ENCODE measurements at regions of chr13 and their contacts with region 1.

Region 1: DNA sequence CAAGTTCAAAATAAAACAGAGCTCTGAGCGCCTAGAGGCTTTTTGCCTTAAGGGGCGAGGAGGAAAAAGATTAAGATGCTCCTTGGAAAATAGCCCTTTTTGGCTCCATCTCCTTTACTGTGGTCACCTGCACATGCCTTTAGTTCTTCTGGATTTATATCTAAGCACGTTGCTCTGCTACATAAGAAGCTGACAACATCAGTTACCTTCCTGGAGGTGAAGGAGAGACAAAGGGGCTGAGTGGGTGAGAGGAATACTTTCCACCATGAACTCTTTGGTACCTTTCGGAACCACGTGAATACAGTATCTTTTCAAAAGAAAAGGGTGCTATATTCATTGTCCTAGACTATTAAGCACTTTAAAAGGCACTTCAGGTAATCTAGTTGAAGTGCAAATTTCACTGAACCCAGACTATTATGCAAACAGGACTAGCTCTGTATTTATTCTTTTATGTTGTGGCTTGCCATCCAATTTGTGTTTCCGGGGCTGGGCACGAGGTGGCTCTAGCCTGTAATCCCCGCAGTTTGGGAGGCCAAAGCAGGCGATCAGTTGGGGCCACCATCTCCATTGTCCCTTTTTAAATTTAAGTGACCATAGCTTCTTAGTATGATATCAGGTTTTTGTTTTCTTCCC is 201.5 kb downstream of the TM9SF2 start:
- DNase-seq: no peak
- H3K4me3 ChIP-seq: no peak overlapping the region
- H3K27ac ChIP-seq: peak overlapping the region; percentile 31; the same call in 1 of the 2 replicates
- H3K4me1 ChIP-seq: peaks cover 6 to 37% (median 14%) of the 10 kb centered on the region in 4 experiments
- H3K27me3 ChIP-seq: no peaks in the 10 kb centered on the region
- CTCF ChIP-seq: peak; percentile 25 to 42 (median 26); a peak in 3 of 4 replicates
- EP300 ChIP-seq: no peak
- POLR2A ChIP-seq: no peak
- RAD21 ChIP-seq: peak; percentile 52; a peak in 3 of 4 replicates

Region 2: DNA sequence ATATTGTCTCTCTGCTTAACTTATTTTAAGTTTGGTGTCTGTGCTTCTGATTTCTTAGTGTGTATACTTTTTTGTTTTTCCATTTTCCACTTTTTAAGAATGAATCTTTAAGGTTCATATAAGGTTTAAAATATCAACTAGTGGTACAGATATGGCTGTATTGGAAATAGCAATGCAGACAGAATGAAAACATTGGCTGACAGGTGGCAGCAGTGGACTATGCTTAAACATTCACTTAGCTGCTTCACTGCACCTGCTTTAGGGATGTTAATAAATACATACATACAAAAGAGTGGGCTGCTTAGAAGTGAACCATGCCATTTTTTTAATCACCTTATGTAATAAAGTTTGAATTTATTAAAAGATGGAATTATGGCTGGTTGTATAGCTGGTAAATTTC is 174.3 kb before region 1 on chr13:
- CTCF ChIA-PET with region 1: no interaction called
- POLR2A ChIA-PET with region 1: no interaction called
- DNase-seq: no peak
- H3K4me3 ChIP-seq: no peak overlapping the region
- H3K27ac ChIP-seq: no peak overlapping the region
- H3K4me1 ChIP-seq: peaks cover 0 to 2% (median 0%) of the 10 kb centered on the region in 4 experiments; a peak in 1 of 7 replicates
- H3K27me3 ChIP-seq: no peaks in the 10 kb centered on the region
- CTCF ChIP-seq: no peak
- EP300 ChIP-seq: no peak
- POLR2A ChIP-seq: no peak
- RAD21 ChIP-seq: peak; percentile 28 to 33

Region 3: GRCh38 chr13:99717959-99718674 is 15.3 kb after region 1 on chr13:
- CTCF ChIA-PET with region 1: interaction called, 7 read pairs
- POLR2A ChIA-PET with region 1: interaction called, 14 read pairs
- DNase-seq: no peak
- H3K4me3 ChIP-seq: peak overlapping the region in 1 of 4 experiments; percentile 25; a peak in 1 of 8 replicates
- H3K27ac ChIP-seq: peak overlapping the region; percentile 59; the same call in 1 of the 2 replicates
- H3K4me1 ChIP-seq: peaks cover 3 to 13% (median 11%) of the 10 kb centered on the region in 4 experiments; a peak in 6 of 7 replicates
- H3K27me3 ChIP-seq: no peaks in the 10 kb centered on the region
- CTCF ChIP-seq: no peak
- EP300 ChIP-seq: peak in 1 of 2 experiments; percentile 78; a peak in 1 of 3 replicates
- POLR2A ChIP-seq: no peak
- RAD21 ChIP-seq: 0 out of 4 replicates have a peak, but pooled peaks of 1 of the 2 experiments have one; percentile 5

Region 4: DNA sequence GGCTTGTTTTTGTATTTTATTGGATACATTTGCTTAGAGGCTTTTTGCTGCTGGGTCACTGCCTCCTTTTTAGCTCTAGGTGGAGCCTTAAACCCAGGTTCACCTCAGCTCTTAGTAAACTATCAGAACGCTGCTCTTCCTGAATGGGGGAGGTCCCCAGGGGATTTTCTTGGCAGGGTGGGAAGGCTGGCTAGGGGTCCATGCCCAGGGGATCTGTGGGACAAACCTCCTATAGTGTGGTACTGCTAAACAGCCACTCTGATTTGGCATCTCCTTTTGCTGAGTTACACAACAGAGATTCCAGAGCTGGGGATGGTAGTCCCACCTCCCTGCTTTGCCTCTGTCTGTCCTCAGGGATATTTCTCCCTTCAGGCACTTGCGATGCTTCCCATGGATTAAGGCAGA is 63.8 kb after region 1 on chr13:
- CTCF ChIA-PET with region 1: interaction called, 11 read pairs
- POLR2A ChIA-PET with region 1: no interaction called
- DNase-seq: peak; percentile 33 to 63
- H3K4me3 ChIP-seq: no peak overlapping the region
- H3K27ac ChIP-seq: no peak overlapping the region; the same call in 1 of the 2 replicates
- H3K4me1 ChIP-seq: peaks cover 5 to 12% (median 7%) of the 10 kb centered on the region in 4 experiments; a peak in 5 of 7 replicates
- H3K27me3 ChIP-seq: no peaks in the 10 kb centered on the region
- CTCF ChIP-seq: peak in 2 of 3 experiments; percentile 64 to 78; a peak in 3 of 4 replicates
- EP300 ChIP-seq: no peak
- POLR2A ChIP-seq: no peak
- RAD21 ChIP-seq: peak; percentile 89 to 92

Measured in H1 (cell line).